ENCODE measurements at regions of chr10 and their contacts with region 1.

Region 1: GRCh38 chr10:47043138-47043750 is 132.0 kb downstream of the PTPN20 start:
- DNase-seq: peak in 1 of 2 donors; percentile 33
- H3K4me3 ChIP-seq: no peak overlapping the region
- H3K27ac ChIP-seq: no peak overlapping the region
- H3K4me1 ChIP-seq: no peaks in the 10 kb centered on the region
- H3K27me3 ChIP-seq: no peaks in the 10 kb centered on the region
- CTCF ChIP-seq: no peak
- POLR2A ChIP-seq: no peak

Region 2: GRCh38 chr10:46234431-46235060 is 808.7 kb before region 1 on chr10:
- intact Hi-C with region 1: no loop called
- DNase-seq: peak; percentile 31 to 35
- H3K4me3 ChIP-seq: no peak overlapping the region
- H3K27ac ChIP-seq: no peak overlapping the region
- H3K4me1 ChIP-seq: no peaks in the 10 kb centered on the region
- H3K27me3 ChIP-seq: no peaks in the 10 kb centered on the region
- CTCF ChIP-seq: no peak
- POLR2A ChIP-seq: no peak

Region 3: DNA sequence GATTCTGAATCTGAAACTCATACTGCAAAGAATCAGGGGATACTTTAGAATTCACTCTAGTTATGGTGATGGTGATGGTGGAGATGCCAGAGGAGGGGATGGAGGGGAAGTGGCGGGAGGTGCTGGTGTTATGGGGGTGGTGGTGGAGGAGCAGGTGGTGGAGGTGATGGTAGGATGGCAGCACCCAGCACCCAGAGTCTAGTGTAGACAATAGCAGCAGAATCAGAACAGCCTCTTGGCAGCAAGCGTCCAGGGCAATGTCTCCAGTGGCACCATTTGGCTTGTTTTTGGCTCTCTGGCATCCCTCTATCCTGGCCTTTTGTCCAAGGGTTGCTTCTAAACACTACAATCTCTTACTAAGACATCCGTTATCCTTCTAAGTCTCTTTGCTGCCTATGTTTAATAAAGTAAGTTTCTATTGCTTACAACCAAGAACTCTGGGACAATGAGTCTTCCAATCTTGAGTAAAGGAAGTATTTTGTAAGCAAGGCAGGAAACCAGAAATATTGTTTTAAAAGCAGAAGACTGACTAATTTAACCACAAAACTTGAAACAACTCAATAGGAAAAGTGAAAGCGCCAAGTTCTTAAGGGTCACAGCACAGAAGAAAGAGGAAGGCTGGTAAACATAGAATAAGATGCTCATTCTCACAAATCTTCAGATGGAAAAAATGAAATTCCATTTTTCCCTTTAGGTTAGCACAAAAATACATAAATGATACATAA is 214.3 kb after region 1 on chr10:
- intact Hi-C with region 1: no loop called
- DNase-seq: peak in 1 of 2 donors; percentile 2
- H3K4me3 ChIP-seq: no peak overlapping the region
- H3K27ac ChIP-seq: no peak overlapping the region
- H3K4me1 ChIP-seq: no peaks in the 10 kb centered on the region
- H3K27me3 ChIP-seq: no peaks in the 10 kb centered on the region
- CTCF ChIP-seq: no peak
- POLR2A ChIP-seq: no peak

Region 4: DNA sequence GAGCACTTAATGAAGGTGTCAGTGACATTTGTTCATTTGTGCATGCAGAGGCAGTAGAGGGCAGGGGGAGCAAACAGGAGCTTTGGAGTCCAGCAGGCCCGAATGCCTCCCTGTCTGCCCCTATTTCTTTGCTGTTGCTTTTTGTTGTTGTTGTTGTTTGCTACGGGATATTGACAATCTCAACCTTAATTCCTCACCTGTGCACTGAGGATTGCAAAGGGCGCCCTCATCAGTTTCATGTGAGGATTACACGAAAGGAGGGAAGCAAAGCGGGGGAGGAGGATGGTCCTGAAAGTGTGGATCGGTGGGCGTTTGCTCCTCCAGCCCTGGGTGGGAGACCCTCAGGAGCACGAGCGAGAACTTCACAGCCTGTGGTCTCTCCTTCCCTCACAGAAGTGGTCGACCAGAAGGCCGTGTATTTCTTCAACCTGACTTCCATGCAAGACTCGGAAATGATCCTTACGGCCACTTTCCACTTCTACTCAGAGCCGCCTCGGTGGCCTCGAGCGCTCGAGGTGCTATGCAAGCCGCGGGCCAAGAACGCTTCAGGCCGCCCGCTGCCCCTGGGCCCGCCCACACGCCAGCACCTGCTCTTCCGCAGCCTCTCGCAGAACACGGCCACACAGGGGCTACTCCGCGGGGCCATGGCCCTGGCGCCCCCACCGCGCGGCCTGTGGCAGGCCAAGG is 266.3 kb after region 1 on chr10:
- intact Hi-C with region 1: loop called (anchors 5 kb)
- DNase-seq: no peak
- H3K4me3 ChIP-seq: no peak overlapping the region
- H3K27ac ChIP-seq: no peak overlapping the region
- H3K4me1 ChIP-seq: no peaks in the 10 kb centered on the region
- H3K27me3 ChIP-seq: no peaks in the 10 kb centered on the region
- CTCF ChIP-seq: no peak
- POLR2A ChIP-seq: no peak

Measured in breast epithelium (tissue), 4 donors.